ENCODE measurements at regions of chr5 and their contacts with region 1.

Region 1: GRCh38 chr5:137858954-137859353 is 8.7 kb upstream of the MYOT start:
- DNase-seq: no peak
- CTCF ChIP-seq: no peak

Region 2: GRCh38 chr5:137872466-137872865 is 13.5 kb after region 1 on chr5:
- CTCF ChIA-PET with region 1: interaction called, 14 read pairs
- POLR2A ChIA-PET with region 1: no interaction called
- DNase-seq: no peak
- CTCF ChIP-seq: no peak

Region 3: DNA sequence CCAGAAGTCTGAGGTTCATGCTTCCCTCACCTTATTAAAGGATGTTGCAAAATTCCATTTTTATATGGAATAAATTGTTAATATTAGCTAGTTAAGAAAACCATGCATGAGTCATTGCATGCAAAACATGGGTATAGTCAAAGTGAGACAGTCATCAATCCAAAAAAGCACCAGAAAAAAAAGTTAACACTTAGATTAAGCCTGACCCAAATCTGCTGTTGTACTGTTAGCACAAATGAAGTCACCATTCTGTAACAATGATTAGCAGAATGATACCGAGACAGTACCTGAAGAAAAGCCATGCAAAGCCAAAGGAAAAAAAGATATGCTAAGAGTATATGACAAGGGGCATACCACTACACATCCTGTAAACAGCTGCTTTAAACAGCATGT is 79.8 kb after region 1 on chr5:
- CTCF ChIA-PET with region 1: no interaction called
- POLR2A ChIA-PET with region 1: no interaction called
- DNase-seq: peak; percentile 22
- CTCF ChIP-seq: no peak